CD14-positive monocyte (primary cell): ENCODE measurements at regions of chr14 and their contacts with region 1.

Region 1: GRCh38 chr14:72516936-72517700 is 376.8 kb downstream of the DPF3 start:
- DNase-seq: peak; percentile 55 to 61 (median 59)
- H3K4me3 ChIP-seq: no peak overlapping the region
- H3K4me3 Mint-ChIP-seq: no peak overlapping the region
- H3K27ac ChIP-seq: no peak overlapping the region
- H3K27ac Mint-ChIP-seq: peak overlapping the region in 1 of 7 donors; percentile 74
- H3K4me1 ChIP-seq: peaks cover 29 to 31% of the 10 kb centered on the region in 2 donors
- H3K4me1 Mint-ChIP-seq: peaks cover 37% of the 10 kb centered on the region
- H3K27me3 ChIP-seq: peaks cover 5 to 7% of the 10 kb centered on the region in 2 donors
- H3K27me3 Mint-ChIP-seq: peaks cover 11 to 20% (median 17%) of the 10 kb centered on the region in 3 donors
- CTCF ChIP-seq: peak; percentile 90

Region 2: DNA sequence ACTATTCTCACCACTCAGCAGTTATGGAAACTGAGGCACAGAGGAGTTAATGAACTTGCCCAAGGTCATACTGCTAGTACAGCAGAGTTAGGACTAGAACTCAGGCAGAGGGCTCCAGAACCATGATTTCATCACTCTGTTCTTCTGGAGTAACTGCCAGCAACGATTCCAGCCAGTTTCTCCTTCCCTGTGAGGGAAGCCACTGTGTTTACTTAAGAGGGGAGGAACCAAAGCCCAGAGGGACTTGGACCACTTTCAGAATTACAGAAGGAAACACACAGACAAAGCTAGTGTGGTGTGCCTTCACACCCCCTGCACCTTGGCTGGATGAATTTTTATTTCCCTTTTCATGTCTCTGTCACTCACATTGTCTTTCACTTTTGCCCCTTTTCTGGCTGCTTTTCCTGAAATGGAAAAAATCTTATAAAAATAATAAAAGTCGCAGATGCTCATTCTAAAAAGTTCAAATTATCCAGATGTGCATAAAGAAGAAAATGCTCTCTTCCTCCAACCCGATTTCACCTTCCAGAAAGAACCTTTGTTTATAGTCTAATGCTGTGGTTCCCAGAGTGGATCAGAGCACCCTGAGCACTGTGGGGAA is 21.4 kb before region 1 on chr14:
- intact Hi-C with region 1: no loop called
- DNase-seq: no peak
- H3K4me3 ChIP-seq: no peak overlapping the region
- H3K4me3 Mint-ChIP-seq: no peak overlapping the region
- H3K27ac ChIP-seq: no peak overlapping the region
- H3K27ac Mint-ChIP-seq: peak overlapping the region in 1 of 7 donors; percentile 2
- H3K4me1 ChIP-seq: no peaks in the 10 kb centered on the region
- H3K4me1 Mint-ChIP-seq: no peaks in the 10 kb centered on the region
- H3K27me3 ChIP-seq: no peaks in the 10 kb centered on the region
- H3K27me3 Mint-ChIP-seq: peaks cover 0 to 2% (median 0%) of the 10 kb centered on the region in 3 donors
- CTCF ChIP-seq: no peak

Region 3: GRCh38 chr14:72535485-72535884 is 18.4 kb after region 1 on chr14:
- intact Hi-C with region 1: loop called in 1 of 2 experiments (anchors 2 kb)
- DNase-seq: peak; percentile 76 to 90 (median 88)
- H3K4me3 ChIP-seq: peak overlapping the region in 1 of 3 experiments; percentile 52
- H3K4me3 Mint-ChIP-seq: peak overlapping the region in 1 of 2 donors; percentile 44
- H3K27ac ChIP-seq: peak overlapping the region in 1 of 2 donors; percentile 37
- H3K27ac Mint-ChIP-seq: peak overlapping the region in 6 of 7 donors; percentile 56 to 87 (median 75)
- H3K4me1 ChIP-seq: peaks cover 44 to 49% of the 10 kb centered on the region in 2 donors
- H3K4me1 Mint-ChIP-seq: peaks cover 50% of the 10 kb centered on the region
- H3K27me3 ChIP-seq: no peaks in the 10 kb centered on the region
- H3K27me3 Mint-ChIP-seq: peaks cover 17 to 22% (median 22%) of the 10 kb centered on the region in 3 donors
- CTCF ChIP-seq: no peak

Region 4: GRCh38 chr14:72558721-72559120 is 41.6 kb after region 1 on chr14:
- intact Hi-C with region 1: no loop called
- DNase-seq: no peak
- H3K4me3 ChIP-seq: no peak overlapping the region
- H3K4me3 Mint-ChIP-seq: peak overlapping the region in 1 of 2 donors; percentile 52
- H3K27ac ChIP-seq: no peak overlapping the region
- H3K27ac Mint-ChIP-seq: no peak overlapping the region
- H3K4me1 ChIP-seq: no peaks in the 10 kb centered on the region
- H3K4me1 Mint-ChIP-seq: no peaks in the 10 kb centered on the region
- H3K27me3 ChIP-seq: peaks cover 0 to 28% of the 10 kb centered on the region in 2 donors
- H3K27me3 Mint-ChIP-seq: peaks cover 24 to 45% (median 34%) of the 10 kb centered on the region in 3 donors
- CTCF ChIP-seq: no peak

Region 5: GRCh38 chr14:72904840-72905561 is 387.9 kb after region 1 on chr14:
- intact Hi-C with region 1: loop called (anchors 2 kb)
- DNase-seq: peak; percentile 54 to 71 (median 69)
- H3K4me3 ChIP-seq: no peak overlapping the region
- H3K4me3 Mint-ChIP-seq: no peak overlapping the region
- H3K27ac ChIP-seq: no peak overlapping the region
- H3K27ac Mint-ChIP-seq: no peak overlapping the region
- H3K4me1 ChIP-seq: no peaks in the 10 kb centered on the region
- H3K4me1 Mint-ChIP-seq: no peaks in the 10 kb centered on the region
- H3K27me3 ChIP-seq: peaks cover 6 to 12% of the 10 kb centered on the region in 2 donors
- H3K27me3 Mint-ChIP-seq: peaks cover 12 to 26% (median 13%) of the 10 kb centered on the region in 3 donors
- CTCF ChIP-seq: peak; percentile 96

Region 6: DNA sequence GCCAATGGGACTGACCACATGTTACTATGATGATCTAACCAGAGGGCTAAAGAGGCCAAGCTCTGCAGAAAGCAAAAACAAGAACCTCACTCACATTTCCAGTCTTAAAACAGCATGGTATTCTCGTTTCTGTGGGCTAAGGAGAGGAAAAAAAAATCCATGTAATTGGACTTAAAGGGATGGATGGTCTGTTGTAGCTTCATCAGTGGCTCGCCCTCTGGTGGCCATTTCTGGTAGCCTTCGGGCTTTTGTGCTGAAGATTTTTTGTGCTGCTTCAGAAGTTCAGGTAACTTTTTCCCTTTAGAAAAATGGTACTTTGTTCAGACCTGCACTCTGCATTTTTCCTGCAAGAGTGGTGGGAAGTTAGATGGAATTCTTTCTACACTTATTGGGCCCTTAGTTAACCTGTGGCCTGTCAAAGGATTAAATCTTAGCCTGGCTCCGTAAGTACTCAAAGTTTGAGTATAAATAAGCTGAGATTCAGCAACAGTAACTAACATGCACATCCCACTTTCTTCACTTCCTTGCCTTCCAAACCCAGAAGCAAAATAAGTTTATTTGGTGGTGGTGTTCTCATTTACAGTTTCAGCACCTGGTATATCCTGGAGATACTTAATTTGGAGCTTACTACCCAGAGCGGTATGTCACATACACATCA is 431.5 kb after region 1 on chr14:
- intact Hi-C with region 1: loop called in 1 of 2 experiments (anchors 2 kb)
- DNase-seq: peak in 2 of 3 donors; percentile 32 to 40
- H3K4me3 ChIP-seq: no peak overlapping the region
- H3K4me3 Mint-ChIP-seq: no peak overlapping the region
- H3K27ac ChIP-seq: no peak overlapping the region
- H3K27ac Mint-ChIP-seq: no peak overlapping the region
- H3K4me1 ChIP-seq: peaks cover 6 to 8% of the 10 kb centered on the region in 2 donors
- H3K4me1 Mint-ChIP-seq: peaks cover 7% of the 10 kb centered on the region
- H3K27me3 ChIP-seq: no peaks in the 10 kb centered on the region
- H3K27me3 Mint-ChIP-seq: peaks cover 0 to 5% (median 0%) of the 10 kb centered on the region in 3 donors
- CTCF ChIP-seq: peak; percentile 89